PC-3 (cell line): ENCODE measurements at regions of chr20 and their contacts with region 1.

Region 1: DNA sequence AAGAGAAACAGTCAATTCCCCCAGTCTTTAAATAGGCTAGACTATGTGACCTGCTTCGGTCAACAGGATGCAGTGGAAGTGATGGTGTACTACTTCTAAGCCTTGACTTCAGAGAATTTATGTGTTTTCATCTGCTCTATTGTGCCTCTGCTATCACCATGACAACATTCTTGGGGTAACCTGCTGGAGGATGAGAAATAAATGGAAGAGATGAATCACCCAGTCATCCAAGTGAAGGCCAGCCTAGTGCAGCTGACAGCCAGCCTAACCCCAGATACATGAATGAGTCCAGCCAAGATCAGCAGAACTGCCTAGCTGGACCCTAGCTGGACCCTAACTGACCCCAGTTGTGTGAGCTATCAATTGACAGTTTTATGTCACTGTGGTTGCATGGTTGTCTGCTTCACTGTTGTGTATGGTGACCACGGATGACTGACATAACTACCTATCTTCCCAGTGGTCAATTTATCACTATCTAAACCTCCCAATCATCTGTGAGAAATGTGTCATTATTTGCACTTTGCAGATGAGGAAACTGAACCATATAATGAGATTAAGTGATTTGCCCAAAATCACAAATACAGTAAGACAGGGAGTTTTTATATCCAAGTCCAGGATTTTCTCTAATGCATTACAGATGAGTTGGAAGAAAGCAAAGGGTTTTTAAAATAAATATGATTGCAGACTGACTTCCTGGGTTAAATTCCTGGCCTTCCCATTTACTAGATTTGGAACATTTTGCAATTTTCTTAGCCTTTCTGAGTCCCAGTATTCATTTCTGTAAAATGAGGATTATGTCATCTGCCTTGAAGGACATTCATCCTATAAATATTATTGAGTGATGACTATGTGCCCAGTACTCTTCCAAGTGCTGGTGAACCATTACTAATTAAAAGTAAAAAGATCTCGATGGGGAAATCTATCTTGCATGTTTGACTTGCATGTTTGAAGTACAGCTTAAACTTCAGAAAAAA is 136.4 kb upstream of the PLCB4 start:
- DNase-seq: peak; percentile 66
- ATAC-seq: peak; percentile 82
- H3K4me3 ChIP-seq: no peak overlapping the region
- H3K27ac ChIP-seq: peak overlapping the region; percentile 77
- H3K4me1 ChIP-seq: peaks cover 26% of the 10 kb centered on the region
- H3K27me3 ChIP-seq: no peaks in the 10 kb centered on the region
- CTCF ChIP-seq: no peak

Region 2: DNA sequence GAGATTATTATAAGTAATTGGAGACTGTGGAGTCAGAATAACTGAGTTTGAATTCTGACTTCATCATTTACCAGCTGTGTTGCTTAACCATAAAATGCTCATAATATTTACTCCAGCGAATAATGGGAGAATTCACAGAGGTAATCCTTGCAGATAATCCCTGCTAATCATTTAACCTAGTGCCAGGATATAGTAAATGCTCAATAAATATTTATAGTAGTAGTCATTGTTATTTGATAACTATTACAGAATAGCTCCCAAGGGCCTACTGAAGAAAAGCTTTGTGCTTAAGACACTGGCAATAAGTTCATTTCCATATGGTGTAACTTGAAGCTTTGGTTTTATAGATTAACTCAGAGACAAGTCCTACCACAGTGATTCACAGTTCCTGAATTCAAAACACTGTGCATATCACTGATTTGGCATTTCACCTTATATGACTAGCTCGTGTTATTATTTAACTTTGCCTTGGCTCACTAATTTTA is 72.4 kb before region 1 on chr20:
- CTCF ChIA-PET with region 1: no interaction called
- POLR2A ChIA-PET with region 1: no interaction called
- intact Hi-C with region 1: loop called (anchors 1 kb)
- DNase-seq: peak; percentile 96
- ATAC-seq: peak; percentile 91
- H3K4me3 ChIP-seq: peak overlapping the region; percentile 49; the same call in 1 of the 2 replicates
- H3K27ac ChIP-seq: peak overlapping the region; percentile 87
- H3K4me1 ChIP-seq: peaks cover 36% of the 10 kb centered on the region
- H3K27me3 ChIP-seq: no peaks in the 10 kb centered on the region
- CTCF ChIP-seq: no peak

Region 3: DNA sequence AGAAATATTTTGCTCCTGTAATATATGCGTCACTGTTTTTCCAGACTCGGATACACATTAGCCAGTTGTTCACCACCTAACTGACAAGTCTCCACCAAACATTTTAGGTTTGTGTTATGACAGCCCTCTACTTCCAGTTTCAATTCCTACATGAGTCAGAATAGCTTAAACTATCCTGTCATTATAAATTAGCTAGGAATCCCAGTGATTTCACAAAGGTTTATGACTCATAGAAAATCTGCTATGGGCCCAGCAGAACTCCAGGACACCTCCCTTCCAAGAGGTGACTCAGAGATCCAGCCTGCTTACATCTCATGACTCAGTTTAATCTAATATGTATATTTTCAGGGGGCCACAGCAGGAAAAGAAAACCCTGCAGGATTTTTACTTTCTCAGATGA is 119.0 kb after region 1 on chr20:
- CTCF ChIA-PET with region 1: no interaction called
- POLR2A ChIA-PET with region 1: no interaction called
- intact Hi-C with region 1: loop called (anchors 5 kb)
- DNase-seq: peak; percentile 99
- ATAC-seq: peak; percentile 96
- H3K4me3 ChIP-seq: peak overlapping the region; percentile 44
- H3K27ac ChIP-seq: peak overlapping the region; percentile 79
- H3K4me1 ChIP-seq: peaks cover 30% of the 10 kb centered on the region
- H3K27me3 ChIP-seq: no peaks in the 10 kb centered on the region
- CTCF ChIP-seq: no peak

Region 4: GRCh38 chr20:9262653-9263194 is 330.2 kb after region 1 on chr20:
- CTCF ChIA-PET with region 1: no interaction called
- POLR2A ChIA-PET with region 1: interaction called, 11 read pairs
- intact Hi-C with region 1: no loop called
- DNase-seq: no peak
- ATAC-seq: no peak
- H3K4me3 ChIP-seq: no peak overlapping the region
- H3K27ac ChIP-seq: no peak overlapping the region
- H3K4me1 ChIP-seq: peaks cover 10% of the 10 kb centered on the region
- H3K27me3 ChIP-seq: no peaks in the 10 kb centered on the region
- CTCF ChIP-seq: no peak

Region 5: DNA sequence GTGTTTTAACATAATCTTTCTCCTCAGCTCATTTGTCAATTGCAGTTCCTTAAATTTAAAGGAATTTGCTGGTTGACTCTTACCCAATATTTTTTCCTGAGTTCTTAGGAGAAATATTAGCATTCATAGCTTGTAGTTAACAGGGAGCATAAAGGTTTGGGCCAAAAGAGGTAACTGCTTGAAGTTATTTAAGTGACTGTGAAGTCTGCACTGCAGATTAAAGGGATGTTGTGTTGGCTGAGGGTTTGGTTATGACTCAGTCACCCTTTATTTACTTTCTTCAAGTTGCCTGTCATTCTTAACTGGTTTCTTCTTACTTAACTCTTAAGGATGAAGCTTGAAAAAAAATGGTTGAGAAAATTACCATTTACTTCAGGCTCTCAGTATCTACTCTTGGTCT is 361.6 kb after region 1 on chr20:
- CTCF ChIA-PET with region 1: no interaction called
- POLR2A ChIA-PET with region 1: no interaction called
- intact Hi-C with region 1: loop called (anchors 10 kb)
- DNase-seq: peak; percentile 87
- ATAC-seq: peak; percentile 98
- H3K4me3 ChIP-seq: no peak overlapping the region
- H3K27ac ChIP-seq: no peak overlapping the region
- H3K4me1 ChIP-seq: peaks cover 22% of the 10 kb centered on the region
- H3K27me3 ChIP-seq: no peaks in the 10 kb centered on the region
- CTCF ChIP-seq: no peak